Activated T-helper 1 cell treated with anti-CD3 and anti-CD28 coated beads, Interleukin-12 subunit alpha, Interleukin-12 subunit beta, Interleukin-2, Interleukin-4 antibody, amounts not matched to agents 30 ng/mL and 10 ng/mL and 1 ng/mL, durations not matched to agents 14 hours and 24 hours and 36 hours (primary cell): ENCODE measurements at regions of chr15 and their contacts with region 1.

Region 1: DNA sequence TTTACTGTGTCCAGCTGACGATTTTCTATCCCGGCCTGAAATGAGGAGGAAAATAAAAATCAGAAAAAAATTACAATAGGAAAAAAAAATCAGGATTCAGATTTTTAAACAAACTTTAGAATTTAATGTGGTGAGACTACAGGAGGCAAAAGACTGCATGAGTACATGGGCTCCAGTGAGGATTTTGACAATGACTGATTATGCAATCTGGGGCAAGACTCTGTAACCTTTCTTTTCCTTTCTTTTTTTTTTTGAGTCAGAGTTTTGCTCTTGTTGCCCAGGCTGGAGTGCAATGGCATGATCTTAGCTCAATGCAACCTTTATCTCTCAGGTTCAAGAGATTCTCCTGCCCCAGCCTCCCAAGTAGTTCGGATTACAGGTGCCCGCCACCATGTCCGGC is 29.9 kb downstream of the SPG11 start:
- DNase-seq: no peak
- H3K4me3 Mint-ChIP-seq: peak overlapping the region; percentile 74
- H3K27ac Mint-ChIP-seq: peak overlapping the region; percentile 96
- H3K4me1 Mint-ChIP-seq: peaks cover 20% of the 10 kb centered on the region
- H3K27me3 Mint-ChIP-seq: no peaks in the 10 kb centered on the region

Region 2: GRCh38 chr15:44519537-44519936 is 114.1 kb before region 1 on chr15:
- intact Hi-C with region 1: no loop called
- DNase-seq: no peak
- H3K4me3 Mint-ChIP-seq: no peak overlapping the region
- H3K27ac Mint-ChIP-seq: no peak overlapping the region
- H3K4me1 Mint-ChIP-seq: peaks cover 8% of the 10 kb centered on the region
- H3K27me3 Mint-ChIP-seq: no peaks in the 10 kb centered on the region

Region 3: DNA sequence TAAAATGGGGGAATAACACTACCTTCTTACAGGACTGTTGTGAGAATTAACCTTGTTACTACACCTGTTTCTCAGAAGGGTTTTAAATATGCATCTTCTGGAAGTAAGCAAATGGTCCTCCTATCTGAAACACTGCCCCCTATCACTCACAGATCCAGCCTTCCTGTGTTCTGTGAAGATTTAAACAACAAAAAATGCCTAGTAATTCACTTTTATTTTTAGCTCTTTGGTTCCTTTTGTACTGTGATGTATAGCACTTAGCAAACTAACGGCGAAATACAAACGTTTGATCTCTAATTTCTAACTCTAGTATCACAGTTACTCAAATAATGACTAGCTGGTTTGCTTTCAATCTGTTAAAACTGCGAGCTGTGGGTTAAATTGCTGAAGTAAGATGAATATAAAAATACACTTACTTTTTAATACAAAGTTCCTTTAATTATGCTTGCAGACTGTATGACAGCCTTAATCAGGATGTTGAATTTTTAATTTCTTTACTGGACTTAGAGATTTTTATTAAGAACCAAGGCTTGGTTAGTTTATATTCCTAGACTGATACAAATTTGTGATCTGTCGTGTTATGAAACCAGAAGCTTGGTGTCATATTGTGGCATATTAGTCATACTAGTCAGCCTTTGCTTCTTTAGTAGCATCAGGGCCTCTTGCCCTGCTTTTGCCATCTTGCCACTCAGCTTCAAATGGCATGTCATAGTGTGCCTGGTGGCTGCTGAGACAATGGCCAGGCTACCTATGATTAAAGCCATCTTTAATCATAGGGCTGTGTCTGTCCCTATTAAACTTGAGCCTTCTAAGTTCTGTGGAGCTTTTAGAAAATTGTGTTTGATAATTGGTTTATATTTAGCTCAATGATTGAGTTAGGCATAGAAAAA is 87.4 kb before region 1 on chr15:
- intact Hi-C with region 1: loop called (anchors 1 kb)
- DNase-seq: peak; percentile 31
- H3K4me3 Mint-ChIP-seq: peak overlapping the region; percentile 64
- H3K27ac Mint-ChIP-seq: peak overlapping the region; percentile 90
- H3K4me1 Mint-ChIP-seq: peaks cover 54% of the 10 kb centered on the region
- H3K27me3 Mint-ChIP-seq: no peaks in the 10 kb centered on the region

Region 4: DNA sequence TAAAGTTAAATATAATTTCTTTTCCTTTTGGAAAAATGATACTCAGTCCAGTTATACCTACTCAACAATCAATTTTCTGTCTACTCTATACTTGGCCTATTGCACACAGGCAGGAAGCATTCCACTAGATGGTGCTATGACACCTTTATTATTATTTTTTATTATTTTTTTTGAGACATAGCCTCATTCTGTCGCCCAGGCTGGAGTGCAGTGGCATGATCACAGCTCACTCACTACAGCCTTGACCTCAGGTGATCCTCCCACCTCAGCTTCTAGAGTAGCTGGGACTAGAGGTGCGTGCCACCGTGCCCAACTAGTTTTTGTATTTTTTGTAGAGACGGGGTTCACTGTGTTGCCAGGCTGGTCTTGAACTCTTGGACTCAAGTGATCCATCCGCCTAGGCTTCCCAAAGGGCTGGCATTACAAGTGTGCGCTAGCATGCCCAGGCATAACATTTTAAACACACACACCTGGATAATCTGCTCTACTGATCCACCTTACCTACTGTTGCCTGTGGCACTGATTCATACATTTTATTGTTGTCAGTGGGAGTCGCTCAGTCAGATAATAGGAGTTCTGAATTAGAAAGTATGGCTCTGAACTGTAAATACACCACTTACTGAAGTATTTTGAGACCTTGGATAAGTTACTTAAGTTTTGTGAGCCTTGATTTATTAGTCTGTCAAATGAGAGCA is 40.4 kb before region 1 on chr15:
- intact Hi-C with region 1: loop called (anchors 1 kb)
- DNase-seq: no peak
- H3K4me3 Mint-ChIP-seq: no peak overlapping the region
- H3K27ac Mint-ChIP-seq: peak overlapping the region; percentile 55
- H3K4me1 Mint-ChIP-seq: peaks cover 34% of the 10 kb centered on the region
- H3K27me3 Mint-ChIP-seq: no peaks in the 10 kb centered on the region

Region 5: GRCh38 chr15:44647036-44647435 is 13.4 kb after region 1 on chr15:
- intact Hi-C with region 1: loop called (anchors 2 kb)
- DNase-seq: no peak
- H3K4me3 Mint-ChIP-seq: no peak overlapping the region
- H3K27ac Mint-ChIP-seq: peak overlapping the region; percentile 19
- H3K4me1 Mint-ChIP-seq: peaks cover 42% of the 10 kb centered on the region
- H3K27me3 Mint-ChIP-seq: no peaks in the 10 kb centered on the region

Region 6: GRCh38 chr15:44711356-44712107 is 77.9 kb after region 1 on chr15 and contains the start of gene B2M:
- intact Hi-C with region 1: loop called (anchors 1 kb)
- DNase-seq: peak; percentile 95
- H3K4me3 Mint-ChIP-seq: peak within 1 kb of the TSS; percentile 99
- H3K27ac Mint-ChIP-seq: peak within 1 kb of the TSS; percentile 99
- H3K4me1 Mint-ChIP-seq: peaks cover 49% of the 10 kb centered on the region
- H3K27me3 Mint-ChIP-seq: no peaks in the 10 kb centered on the region
- total RNA-seq, gene B2M: 4,313 and 4,559 TPM in 2 replicates

Region 7: DNA sequence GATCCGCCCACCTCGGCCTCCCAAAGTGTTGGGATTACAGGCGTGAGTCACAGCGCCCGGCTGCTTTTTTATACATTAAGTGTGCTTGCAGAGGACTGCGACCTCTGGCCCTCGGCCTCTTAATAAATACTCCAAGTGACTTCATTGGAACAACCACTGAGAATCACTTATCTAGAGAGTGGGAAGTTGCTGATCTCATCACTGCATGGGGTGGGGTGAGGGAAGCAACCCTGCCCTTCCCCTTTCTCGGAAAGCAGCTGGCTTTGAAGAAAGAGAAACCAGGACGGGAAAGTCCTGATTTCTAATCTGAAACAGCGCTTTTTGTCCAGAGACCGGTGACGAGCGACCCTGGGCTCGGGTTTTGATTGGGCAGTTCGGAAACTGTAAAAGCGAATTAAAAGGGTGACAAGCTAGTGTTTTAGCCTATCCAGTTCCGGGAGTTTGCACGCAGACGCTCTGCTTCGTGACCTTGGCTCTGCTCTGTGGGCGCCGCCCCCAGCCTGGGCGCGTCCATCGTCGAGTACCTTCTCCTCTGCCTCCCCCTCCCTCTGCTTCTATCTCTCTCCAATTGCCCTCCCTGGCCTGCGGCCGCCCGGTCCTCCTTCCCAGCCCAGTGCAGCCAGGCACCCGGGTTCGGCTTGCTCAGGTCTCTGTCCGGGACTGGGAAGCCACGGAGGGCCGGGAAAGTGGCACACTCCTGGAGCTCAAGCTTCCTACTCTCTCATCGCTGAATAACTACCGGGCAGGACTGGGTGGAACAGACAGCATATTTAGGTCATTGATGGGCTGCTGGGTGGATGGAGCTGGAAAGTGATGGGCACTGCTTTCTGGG is 95.2 kb after region 1 on chr15:
- intact Hi-C with region 1: loop called (anchors 1 kb)
- DNase-seq: peak; percentile 96
- H3K4me3 Mint-ChIP-seq: peak overlapping the region; percentile 100
- H3K27ac Mint-ChIP-seq: peak overlapping the region; percentile 99
- H3K4me1 Mint-ChIP-seq: peaks cover 77% of the 10 kb centered on the region
- H3K27me3 Mint-ChIP-seq: no peaks in the 10 kb centered on the region

Region 8: GRCh38 chr15:44738340-44738984 is 104.9 kb after region 1 on chr15:
- intact Hi-C with region 1: loop called (anchors 1 kb)
- DNase-seq: no peak
- H3K4me3 Mint-ChIP-seq: peak overlapping the region; percentile 56
- H3K27ac Mint-ChIP-seq: peak overlapping the region; percentile 40
- H3K4me1 Mint-ChIP-seq: peaks cover 44% of the 10 kb centered on the region
- H3K27me3 Mint-ChIP-seq: no peaks in the 10 kb centered on the region